MCF 10A (cell line): ENCODE measurements at regions of chr10 and their contacts with region 1.

Region 1: GRCh38 chr10:73252445-73253224 is at the start of gene MRPS16:
- DNase-seq: peak; percentile 98
- H3K4me3 Mint-ChIP-seq: peak within 1 kb of the TSS; percentile 90
- H3K27ac Mint-ChIP-seq: peak within 1 kb of the TSS; percentile 94
- H3K4me1 Mint-ChIP-seq: peaks cover 9% of the 10 kb centered on the region
- H3K27me3 Mint-ChIP-seq: no peaks in the 10 kb centered on the region
- CTCF ChIP-seq: no peak
- total RNA-seq, gene MRPS16: 203 and 247 TPM in 2 replicates

Region 2: DNA sequence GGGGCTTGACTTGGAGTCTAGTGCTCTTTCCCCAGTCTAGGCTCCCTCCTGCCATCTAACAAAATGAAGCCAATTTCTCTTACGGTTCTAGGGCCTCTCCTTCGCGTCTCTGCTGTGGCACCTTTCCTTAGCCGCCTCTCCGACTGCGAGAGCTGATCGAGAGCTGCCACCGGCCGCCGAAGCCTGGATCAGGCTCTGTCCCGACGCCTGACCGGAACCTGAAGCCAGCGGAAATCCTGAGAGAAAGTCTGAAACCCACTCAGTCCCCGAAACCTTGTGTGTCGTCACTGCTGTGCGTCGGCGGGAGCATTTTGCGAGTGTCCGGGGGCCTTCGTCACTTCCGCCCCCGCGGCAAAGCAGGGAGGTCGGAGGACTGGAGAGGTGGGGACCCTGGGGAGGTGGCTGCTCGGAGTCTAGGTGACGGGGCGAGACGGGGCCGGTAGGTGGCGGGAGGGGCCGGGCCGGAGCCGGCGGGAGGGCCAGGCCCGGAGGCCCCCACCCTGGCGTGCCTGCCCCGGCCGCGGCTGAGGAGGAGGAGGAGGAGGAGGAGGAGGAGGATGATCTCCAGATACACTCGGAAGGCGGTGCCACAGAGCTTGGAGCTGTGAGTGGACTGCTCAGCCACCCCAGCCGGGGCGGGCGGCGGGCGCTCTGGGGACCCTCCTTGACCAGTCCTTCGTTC is 84.7 kb before region 1 on chr10 and contains the starts of genes ECD and FAM149B1:
- CTCF ChIA-PET with region 1: no interaction called
- POLR2A ChIA-PET with region 1: interaction called, 36 read pairs
- intact Hi-C with region 1: no loop called
- DNase-seq: peak; percentile 93
- H3K4me3 Mint-ChIP-seq: peak within 1 kb of the TSS; percentile 92
- H3K27ac Mint-ChIP-seq: peak within 1 kb of the TSS; percentile 99
- H3K4me1 Mint-ChIP-seq: peaks cover 20% of the 10 kb centered on the region
- H3K27me3 Mint-ChIP-seq: no peaks in the 10 kb centered on the region
- CTCF ChIP-seq: no peak
- total RNA-seq, gene ECD: 29.9 and 31.5 TPM in 2 replicates
- total RNA-seq, gene FAM149B1: 22.8 and 27.7 TPM in 2 replicates

Region 3: DNA sequence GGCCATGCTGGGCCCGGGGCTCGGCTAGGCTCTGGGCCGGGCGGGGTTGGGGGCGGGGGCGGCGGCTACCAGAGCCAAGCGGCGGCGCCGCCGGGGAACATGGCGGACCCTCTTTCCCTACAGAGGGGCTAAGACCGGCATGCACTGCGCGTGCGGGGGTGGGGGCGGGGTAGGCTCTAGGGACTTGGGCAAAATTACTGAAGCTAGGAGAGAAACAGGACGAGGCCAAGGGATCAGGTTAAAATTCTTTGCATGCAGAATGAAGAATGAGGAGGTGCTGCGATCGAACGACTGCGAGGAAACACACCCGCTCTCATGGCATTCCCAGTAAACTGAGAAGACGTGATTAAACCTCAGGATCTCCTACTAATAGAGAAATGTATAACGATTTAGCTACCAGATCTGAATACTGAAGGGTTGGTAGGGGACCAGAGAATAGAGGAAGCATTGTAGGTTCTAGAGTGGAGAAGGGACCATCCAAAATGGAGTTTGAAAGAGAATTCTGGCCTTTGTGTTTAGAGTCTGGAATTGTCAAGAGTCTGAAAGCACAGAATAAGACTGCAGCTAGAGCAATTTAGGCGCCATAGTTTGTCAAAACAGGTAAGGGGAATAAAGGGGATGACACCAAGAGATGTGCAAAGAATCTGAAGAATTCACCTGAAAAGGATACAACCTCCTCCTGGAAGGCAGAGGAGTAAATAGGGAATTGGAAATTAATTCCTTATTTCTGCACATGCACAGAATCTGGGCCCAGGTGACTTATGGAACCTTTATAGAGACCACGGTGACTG is 243.4 kb after region 1 on chr10 and contains the start of gene PPP3CB:
- CTCF ChIA-PET with region 1: interaction called, 5 read pairs
- POLR2A ChIA-PET with region 1: interaction called, 24 read pairs
- intact Hi-C with region 1: no loop called
- DNase-seq: peak; percentile 95
- H3K4me3 Mint-ChIP-seq: peak within 1 kb of the TSS; percentile 86
- H3K27ac Mint-ChIP-seq: peak within 1 kb of the TSS; percentile 74
- H3K4me1 Mint-ChIP-seq: peaks cover 28% of the 10 kb centered on the region
- H3K27me3 Mint-ChIP-seq: no peaks in the 10 kb centered on the region
- CTCF ChIP-seq: no peak
- total RNA-seq, gene PPP3CB: 34.8 and 37.4 TPM in 2 replicates